ENCODE measurements at regions of chr16 and their contacts with region 1.

Region 1: GRCh38 chr16:1054660-1055556 is 17.6 kb upstream of the SSTR5 start:
- DNase-seq: peak; percentile 66 to 79
- ATAC-seq: peak; percentile 69 to 83 (median 82)
- H3K4me3 ChIP-seq: no peak overlapping the region
- H3K27ac ChIP-seq: no peak overlapping the region
- H3K4me1 ChIP-seq: no peaks in the 10 kb centered on the region
- H3K27me3 ChIP-seq: peaks cover 0 to 75% (median 12%) of the 10 kb centered on the region in 3 donors
- CTCF ChIP-seq: peak; percentile 67

Region 2: GRCh38 chr16:714558-715476 is 340.1 kb before region 1 on chr16 and contains the start of gene METRN:
- intact Hi-C with region 1: loop called (anchors 2 to 5 kb)
- DNase-seq: peak; percentile 95 to 96
- ATAC-seq: peak; percentile 90 to 91 (median 90)
- H3K4me3 ChIP-seq: peak within 1 kb of the TSS; percentile 74
- H3K27ac ChIP-seq: no peak within 1 kb of the TSS
- H3K4me1 ChIP-seq: peaks cover 12% of the 10 kb centered on the region
- H3K27me3 ChIP-seq: peaks cover 0 to 18% (median 9%) of the 10 kb centered on the region in 3 donors
- CTCF ChIP-seq: no peak
- total RNA-seq, gene METRN: 19.6 to 25.8 (median 22.8) TPM

Region 3: GRCh38 chr16:813204-813915 is 241.5 kb before region 1 on chr16:
- intact Hi-C with region 1: loop called (anchors 1 to 10 kb)
- DNase-seq: peak in 1 of 2 donors; percentile 45
- ATAC-seq: peak in 3 of 4 donors; percentile 30 to 75 (median 49)
- H3K4me3 ChIP-seq: no peak overlapping the region
- H3K27ac ChIP-seq: no peak overlapping the region
- H3K4me1 ChIP-seq: no peaks in the 10 kb centered on the region
- H3K27me3 ChIP-seq: peaks cover 0 to 86% (median 32%) of the 10 kb centered on the region in 3 donors
- CTCF ChIP-seq: peak; percentile 44

Region 4: DNA sequence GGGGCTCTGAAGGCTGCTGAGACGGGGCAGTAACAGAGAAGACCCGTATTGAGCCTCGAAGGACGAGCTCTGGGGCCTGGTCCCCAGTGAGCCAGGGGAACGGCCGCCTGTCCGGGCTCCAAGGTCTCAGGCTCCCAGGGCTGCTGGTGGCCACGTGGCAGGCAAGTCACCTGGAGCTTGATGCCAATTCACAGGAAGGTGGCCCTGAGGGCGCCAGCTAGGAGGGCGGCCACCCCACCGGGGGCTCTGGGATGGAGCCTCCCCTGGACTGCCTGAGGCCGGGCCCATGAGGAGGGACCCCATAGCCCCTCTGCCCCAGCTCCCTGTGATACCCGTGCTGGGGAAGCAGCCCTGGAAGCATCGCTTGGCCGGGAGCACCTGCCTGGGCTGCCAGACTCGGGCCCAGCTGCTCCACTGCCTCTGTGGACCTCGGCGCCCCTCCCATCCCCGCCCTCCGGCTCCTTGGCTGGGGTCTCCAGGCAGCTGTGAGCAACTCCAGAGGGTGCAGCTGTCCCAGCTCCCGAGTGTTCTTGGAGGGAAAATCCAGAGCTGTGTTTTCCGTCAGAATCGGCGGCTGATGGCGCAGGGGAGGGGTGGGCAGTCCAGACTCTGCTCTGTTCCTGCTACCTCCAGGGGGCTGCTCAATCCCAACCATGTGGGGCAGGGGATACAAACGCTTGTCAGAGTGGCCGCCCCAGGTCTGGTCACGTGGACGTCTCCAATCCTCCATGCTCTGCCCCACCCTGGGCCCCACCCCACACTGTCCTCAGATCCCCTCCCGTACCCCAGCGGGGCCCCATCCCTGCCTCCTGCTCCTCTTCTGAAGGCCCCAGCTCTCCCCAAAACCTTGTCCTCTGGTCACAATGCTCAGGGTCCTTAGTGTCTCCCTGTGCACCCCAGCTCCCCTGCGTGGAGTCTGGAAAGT is 187.2 kb before region 1 on chr16:
- intact Hi-C with region 1: no loop called
- DNase-seq: peak; percentile 11 to 42
- ATAC-seq: no peak
- H3K4me3 ChIP-seq: no peak overlapping the region
- H3K27ac ChIP-seq: no peak overlapping the region
- H3K4me1 ChIP-seq: no peaks in the 10 kb centered on the region
- H3K27me3 ChIP-seq: no peaks in the 10 kb centered on the region
- CTCF ChIP-seq: no peak

Region 5: GRCh38 chr16:1102921-1103635 is 48.2 kb after region 1 on chr16:
- intact Hi-C with region 1: loop called (anchors 1 kb)
- DNase-seq: peak; percentile 65 to 84
- ATAC-seq: peak; percentile 59 to 68 (median 64)
- H3K4me3 ChIP-seq: peak overlapping the region; percentile 35
- H3K27ac ChIP-seq: no peak overlapping the region
- H3K4me1 ChIP-seq: peaks cover 8% of the 10 kb centered on the region
- H3K27me3 ChIP-seq: peaks cover 0 to 54% (median 3%) of the 10 kb centered on the region in 3 donors
- CTCF ChIP-seq: peak; percentile 65

Region 6: GRCh38 chr16:1194665-1195392 is 139.9 kb after region 1 on chr16:
- intact Hi-C with region 1: loop called in 1 of 2 experiments (anchors 5 kb)
- DNase-seq: no peak
- ATAC-seq: peak in 1 of 4 donors; percentile 46
- H3K4me3 ChIP-seq: no peak overlapping the region
- H3K27ac ChIP-seq: no peak overlapping the region
- H3K4me1 ChIP-seq: no peaks in the 10 kb centered on the region
- H3K27me3 ChIP-seq: peaks cover 0 to 48% (median 8%) of the 10 kb centered on the region in 3 donors
- CTCF ChIP-seq: peak; percentile 64